Caco-2 (cell line): ENCODE measurements at regions of chr17 and their contacts with region 1.

Region 1: GRCh38 chr17:56319517-56319916 is 166.2 kb downstream of the ANKFN1 start:
- DNase-seq: peak in 1 of 2 experiments; percentile 68
- H3K4me3 ChIP-seq: no peak overlapping the region
- H3K4me3 Mint-ChIP-seq: no peak overlapping the region
- H3K27ac Mint-ChIP-seq: no peak overlapping the region
- H3K4me1 ChIP-seq: no peaks in the 10 kb centered on the region
- H3K4me1 Mint-ChIP-seq: no peaks in the 10 kb centered on the region
- H3K27me3 ChIP-seq: no peaks in the 10 kb centered on the region
- H3K27me3 Mint-ChIP-seq: peaks cover 7% of the 10 kb centered on the region
- CTCF ChIP-seq: peak; percentile 64 to 65

Region 2: GRCh38 chr17:55845385-55845784 is 474.1 kb before region 1 on chr17:
- CTCF ChIA-PET with region 1: no interaction called
- POLR2A ChIA-PET with region 1: no interaction called
- intact Hi-C with region 1: loop called (anchors 10 kb)
- DNase-seq: no peak
- H3K4me3 ChIP-seq: no peak overlapping the region
- H3K4me3 Mint-ChIP-seq: no peak overlapping the region
- H3K27ac Mint-ChIP-seq: no peak overlapping the region
- H3K4me1 ChIP-seq: no peaks in the 10 kb centered on the region
- H3K4me1 Mint-ChIP-seq: no peaks in the 10 kb centered on the region
- H3K27me3 ChIP-seq: no peaks in the 10 kb centered on the region
- H3K27me3 Mint-ChIP-seq: peaks cover 9% of the 10 kb centered on the region
- CTCF ChIP-seq: no peak

Region 3: DNA sequence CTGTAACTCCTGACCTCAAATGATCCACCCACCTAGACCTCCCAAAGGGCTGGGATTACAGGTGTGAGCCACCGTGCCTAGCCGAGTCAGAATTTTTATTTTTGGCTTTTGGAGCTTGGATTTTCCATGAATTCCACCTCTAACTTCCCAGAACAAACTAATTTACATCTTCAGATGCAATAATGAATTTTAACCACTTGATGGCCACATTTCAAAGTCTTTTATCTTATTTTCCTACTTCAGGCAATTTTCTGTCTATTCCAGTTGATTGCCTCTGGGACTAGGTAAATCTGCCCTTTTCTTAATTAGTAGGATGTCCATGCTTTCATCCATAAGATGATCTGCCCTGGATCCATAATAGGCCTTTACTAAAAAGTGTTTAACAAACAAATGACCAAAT is 322.7 kb before region 1 on chr17:
- CTCF ChIA-PET with region 1: no interaction called
- POLR2A ChIA-PET with region 1: no interaction called
- intact Hi-C with region 1: loop called (anchors 2 kb)
- DNase-seq: no peak
- H3K4me3 ChIP-seq: no peak overlapping the region
- H3K4me3 Mint-ChIP-seq: no peak overlapping the region
- H3K27ac Mint-ChIP-seq: no peak overlapping the region
- H3K4me1 ChIP-seq: no peaks in the 10 kb centered on the region
- H3K4me1 Mint-ChIP-seq: no peaks in the 10 kb centered on the region
- H3K27me3 ChIP-seq: no peaks in the 10 kb centered on the region
- H3K27me3 Mint-ChIP-seq: no peaks in the 10 kb centered on the region
- CTCF ChIP-seq: no peak

Region 4: GRCh38 chr17:56030009-56030612 is 289.4 kb before region 1 on chr17:
- CTCF ChIA-PET with region 1: interaction called, 3 read pairs
- POLR2A ChIA-PET with region 1: no interaction called
- intact Hi-C with region 1: loop called (anchors 1 kb)
- DNase-seq: no peak
- H3K4me3 ChIP-seq: no peak overlapping the region
- H3K4me3 Mint-ChIP-seq: no peak overlapping the region
- H3K27ac Mint-ChIP-seq: no peak overlapping the region
- H3K4me1 ChIP-seq: no peaks in the 10 kb centered on the region
- H3K4me1 Mint-ChIP-seq: no peaks in the 10 kb centered on the region
- H3K27me3 ChIP-seq: no peaks in the 10 kb centered on the region
- H3K27me3 Mint-ChIP-seq: peaks cover 14% of the 10 kb centered on the region
- CTCF ChIP-seq: peak; percentile 10 to 35

Region 5: DNA sequence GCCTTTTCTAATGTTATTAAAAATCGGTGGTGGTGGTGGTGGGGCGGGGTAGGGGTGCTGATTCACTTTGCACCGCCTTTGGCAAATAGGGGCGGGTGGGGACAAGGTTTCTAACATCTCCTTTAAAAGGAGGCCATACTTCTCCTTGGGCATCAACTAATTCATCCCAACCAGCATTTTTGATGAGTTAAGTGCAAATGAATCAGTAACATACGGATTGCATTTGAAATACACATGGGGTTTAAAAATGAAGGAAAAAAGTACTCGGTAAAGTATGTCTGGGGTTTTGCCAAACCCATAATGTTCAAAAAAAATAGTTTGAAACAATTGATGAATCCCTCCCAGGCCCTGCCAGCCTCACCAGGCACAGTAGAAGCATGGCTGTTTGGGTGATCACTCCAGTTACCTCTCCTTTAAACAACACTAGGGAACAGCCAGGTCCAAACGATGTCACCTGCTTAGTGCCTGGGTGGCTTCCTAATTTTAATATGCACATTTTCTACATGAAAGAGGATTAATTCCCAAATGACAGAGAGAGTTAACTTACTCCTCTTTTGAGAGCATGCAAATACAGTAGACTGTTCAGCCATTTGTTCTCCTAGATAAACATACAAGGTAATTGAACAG is 59.0 kb before region 1 on chr17:
- CTCF ChIA-PET with region 1: no interaction called
- POLR2A ChIA-PET with region 1: no interaction called
- intact Hi-C with region 1: no loop called
- DNase-seq: no peak
- H3K4me3 ChIP-seq: no peak overlapping the region
- H3K4me3 Mint-ChIP-seq: no peak overlapping the region
- H3K27ac Mint-ChIP-seq: no peak overlapping the region
- H3K4me1 ChIP-seq: no peaks in the 10 kb centered on the region
- H3K4me1 Mint-ChIP-seq: no peaks in the 10 kb centered on the region
- H3K27me3 ChIP-seq: no peaks in the 10 kb centered on the region
- H3K27me3 Mint-ChIP-seq: no peaks in the 10 kb centered on the region
- CTCF ChIP-seq: no peak